Calu3 (cell line): ENCODE measurements at regions of chr9 and their contacts with region 1.

Region 1: DNA sequence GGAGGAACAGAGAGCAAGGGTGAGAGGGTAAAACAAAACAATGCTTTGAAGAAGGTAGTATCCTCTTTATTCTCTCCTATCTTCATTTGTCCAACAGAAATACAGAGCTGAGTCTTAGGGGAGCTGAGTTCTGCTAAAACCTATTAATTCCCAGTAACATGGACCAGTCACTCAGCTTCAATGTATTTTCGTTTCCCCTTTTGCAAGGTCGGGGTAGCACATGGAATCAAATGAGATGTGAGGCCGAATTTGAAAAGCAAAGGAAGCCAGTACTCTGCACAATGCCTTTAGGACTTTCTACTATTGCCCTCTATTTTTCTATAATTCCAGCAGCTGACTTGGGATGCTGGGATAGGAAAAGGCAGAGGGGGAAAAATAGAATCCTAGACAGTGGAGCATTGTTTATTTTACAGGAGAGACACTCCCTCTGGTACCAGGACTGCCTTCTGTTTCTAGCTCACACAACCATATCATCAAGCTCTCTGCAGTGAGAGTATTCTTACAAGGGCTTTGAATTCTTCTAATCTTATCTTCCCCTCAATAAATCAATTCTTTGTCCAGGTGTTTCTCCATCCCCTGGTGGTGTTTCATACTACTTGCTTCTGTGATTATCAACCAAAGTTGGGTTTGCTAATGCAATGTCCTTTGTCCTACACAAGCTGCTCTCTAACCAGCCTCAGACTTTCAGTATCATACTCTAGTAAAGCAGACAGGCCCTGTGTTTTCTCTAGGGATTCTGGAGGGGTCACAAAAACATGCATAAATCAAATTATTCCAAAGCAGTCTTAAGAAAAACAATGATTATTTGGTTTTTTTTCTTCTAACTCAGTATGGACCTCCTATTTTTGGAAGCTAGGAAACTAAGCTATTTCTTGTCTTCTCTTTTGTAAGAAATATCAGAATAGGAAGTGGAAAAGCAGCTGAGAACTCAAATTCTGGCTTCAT is 341.5 kb downstream of the OSTF1 start:
- DNase-seq: no peak
- H3K4me3 Mint-ChIP-seq: no peak overlapping the region
- H3K27ac Mint-ChIP-seq: no peak overlapping the region
- H3K4me1 Mint-ChIP-seq: no peaks in the 10 kb centered on the region
- H3K27me3 Mint-ChIP-seq: peaks cover 67% of the 10 kb centered on the region
- CTCF ChIP-seq: no peak

Region 2: GRCh38 chr9:75200892-75201470 is 228.8 kb before region 1 on chr9:
- CTCF ChIA-PET with region 1: no interaction called
- intact Hi-C with region 1: no loop called
- DNase-seq: peak; percentile 6
- H3K4me3 Mint-ChIP-seq: no peak overlapping the region
- H3K27ac Mint-ChIP-seq: no peak overlapping the region
- H3K4me1 Mint-ChIP-seq: no peaks in the 10 kb centered on the region
- H3K27me3 Mint-ChIP-seq: peaks cover 8% of the 10 kb centered on the region
- CTCF ChIP-seq: peak; percentile 35

Region 3: GRCh38 chr9:75531588-75531987 is 101.8 kb after region 1 on chr9:
- CTCF ChIA-PET with region 1: no interaction called
- intact Hi-C with region 1: no loop called
- DNase-seq: no peak
- H3K4me3 Mint-ChIP-seq: no peak overlapping the region
- H3K27ac Mint-ChIP-seq: no peak overlapping the region
- H3K4me1 Mint-ChIP-seq: no peaks in the 10 kb centered on the region
- H3K27me3 Mint-ChIP-seq: peaks cover 13% of the 10 kb centered on the region
- CTCF ChIP-seq: no peak

Region 4: DNA sequence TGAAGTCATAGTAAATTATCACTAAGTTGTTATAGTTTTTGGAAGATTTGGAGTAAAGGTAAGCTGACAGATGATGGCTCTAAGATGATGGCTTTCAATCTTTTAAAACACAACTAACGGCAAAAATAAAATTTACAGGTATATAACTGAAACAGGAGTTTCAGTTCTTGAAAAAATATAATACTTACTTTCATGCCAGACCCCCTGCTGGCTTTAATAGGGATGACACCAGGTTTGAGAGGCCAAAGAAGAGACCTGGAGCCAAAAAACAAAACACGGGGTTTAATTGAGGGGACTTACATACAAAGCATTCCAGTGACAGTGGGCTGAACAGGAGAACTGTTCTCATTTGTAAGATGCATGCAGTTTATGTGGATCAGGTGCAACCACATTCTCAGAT is 159.0 kb after region 1 on chr9:
- CTCF ChIA-PET with region 1: no interaction called
- intact Hi-C with region 1: loop called (anchors 10 kb)
- DNase-seq: no peak
- H3K4me3 Mint-ChIP-seq: no peak overlapping the region
- H3K27ac Mint-ChIP-seq: no peak overlapping the region
- H3K4me1 Mint-ChIP-seq: no peaks in the 10 kb centered on the region
- H3K27me3 Mint-ChIP-seq: peaks cover 75% of the 10 kb centered on the region
- CTCF ChIP-seq: peak; percentile 19

Region 5: GRCh38 chr9:75775166-75775565 is 345.4 kb after region 1 on chr9:
- CTCF ChIA-PET with region 1: no interaction called
- intact Hi-C with region 1: no loop called
- DNase-seq: no peak
- H3K4me3 Mint-ChIP-seq: no peak overlapping the region
- H3K27ac Mint-ChIP-seq: no peak overlapping the region
- H3K4me1 Mint-ChIP-seq: no peaks in the 10 kb centered on the region
- H3K27me3 Mint-ChIP-seq: peaks cover 10% of the 10 kb centered on the region
- CTCF ChIP-seq: no peak